GM18951 (cell line): ENCODE measurements at regions of chr4 and their contacts with region 1.

Region 1: GRCh38 chr4:94621491-94622080 is 136.2 kb upstream of the BMPR1B start:
- POLR2A ChIP-seq: no peak

Region 2: GRCh38 chr4:94446386-94446785 is 175.2 kb before region 1 on chr4:
- in situ Hi-C with region 1: no loop called
- POLR2A ChIP-seq: no peak

Region 3: GRCh38 chr4:95018785-95019184 is 397.2 kb after region 1 on chr4:
- in situ Hi-C with region 1: no loop called
- POLR2A ChIP-seq: no peak

Region 4: GRCh38 chr4:95124906-95125504 is 503.4 kb after region 1 on chr4:
- in situ Hi-C with region 1: loop called (anchors 25 kb)
- POLR2A ChIP-seq: no peak